WTC11 (cell line): ENCODE measurements at regions of chr16 and their contacts with region 1.

Region 1: GRCh38 chr16:29900102-29900887 is at the start of gene ASPHD1:
- DNase-seq: peak; percentile 86
- ATAC-seq: peak; percentile 54
- H3K4me3 Mint-ChIP-seq: peak within 1 kb of the TSS; percentile 98
- H3K27ac Mint-ChIP-seq: peak within 1 kb of the TSS; percentile 91
- H3K4me1 Mint-ChIP-seq: peaks cover 33% of the 10 kb centered on the region
- H3K27me3 Mint-ChIP-seq: no peaks in the 10 kb centered on the region
- CTCF ChIP-seq: no peak
- total RNA-seq, gene ASPHD1: 17.6 to 26.9 TPM (median 20.2 TPM) in 3 replicates

Region 2: GRCh38 chr16:29805378-29806098 is 94.8 kb before region 1 on chr16:
- CTCF ChIA-PET with region 1: interaction called, 19 read pairs
- POLR2A ChIA-PET with region 1: interaction called, 4 read pairs
- DNase-seq: peak; percentile 97
- ATAC-seq: peak; percentile 78
- H3K4me3 Mint-ChIP-seq: peak overlapping the region; percentile 99
- H3K27ac Mint-ChIP-seq: peak overlapping the region; percentile 100
- H3K4me1 Mint-ChIP-seq: peaks cover 44% of the 10 kb centered on the region
- H3K27me3 Mint-ChIP-seq: no peaks in the 10 kb centered on the region
- CTCF ChIP-seq: no peak

Region 3: GRCh38 chr16:29877266-29877961 is 22.9 kb before region 1 on chr16:
- CTCF ChIA-PET with region 1: interaction called, 17 read pairs
- POLR2A ChIA-PET with region 1: interaction called, 7 read pairs
- DNase-seq: peak; percentile 100
- ATAC-seq: peak; percentile 97
- H3K4me3 Mint-ChIP-seq: peak overlapping the region; percentile 87
- H3K27ac Mint-ChIP-seq: peak overlapping the region; percentile 98
- H3K4me1 Mint-ChIP-seq: peaks cover 10% of the 10 kb centered on the region
- H3K27me3 Mint-ChIP-seq: peaks cover 3% of the 10 kb centered on the region; the same call in 1 of the 2 replicates
- CTCF ChIP-seq: no peak

Region 4: DNA sequence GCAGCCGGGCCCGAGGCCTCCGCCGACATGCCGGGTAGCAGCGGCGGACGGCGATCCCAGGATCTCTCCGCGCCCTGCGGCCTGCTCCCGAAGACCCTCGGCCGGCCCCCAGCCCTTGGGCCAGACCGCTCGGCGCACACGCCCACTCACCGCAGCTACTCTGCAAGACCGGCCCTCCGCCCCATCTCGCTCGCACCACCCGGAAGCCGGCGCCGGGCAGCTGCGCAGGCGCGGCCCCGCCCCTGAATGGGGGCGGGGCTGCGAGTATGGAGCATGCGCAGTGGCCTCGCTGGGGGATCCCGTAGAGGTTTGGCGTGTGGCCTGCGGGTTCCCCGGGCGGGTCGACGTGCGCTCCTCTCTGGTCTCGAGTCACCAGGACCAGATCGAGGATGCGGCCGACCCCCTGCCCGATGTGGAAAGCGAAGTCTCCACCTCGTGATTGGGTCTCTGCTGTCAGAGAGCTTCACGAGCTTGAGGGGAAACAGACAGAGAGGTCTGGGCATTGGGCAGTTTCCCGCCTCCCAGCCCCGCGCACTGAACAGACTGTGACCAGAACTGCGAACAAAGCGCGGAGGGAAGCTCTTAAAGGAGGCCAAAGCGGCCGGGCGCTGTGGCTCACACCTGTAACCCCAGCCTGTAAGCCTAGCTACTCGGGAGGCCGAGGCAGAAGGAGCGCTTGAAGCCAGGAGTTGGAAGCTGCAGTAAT is 25.9 kb after region 1 on chr16 and contains the start of gene KCTD13:
- CTCF ChIA-PET with region 1: interaction called, 10 read pairs
- POLR2A ChIA-PET with region 1: interaction called, 13 read pairs
- DNase-seq: peak; percentile 91
- ATAC-seq: peak; percentile 95
- H3K4me3 Mint-ChIP-seq: peak within 1 kb of the TSS; percentile 93
- H3K27ac Mint-ChIP-seq: peak within 1 kb of the TSS; percentile 97
- H3K4me1 Mint-ChIP-seq: peaks cover 18% of the 10 kb centered on the region
- H3K27me3 Mint-ChIP-seq: no peaks in the 10 kb centered on the region; the same call in 1 of the 2 replicates
- CTCF ChIP-seq: no peak
- total RNA-seq, gene KCTD13: 18.5 to 20.9 TPM (median 19.4 TPM) in 3 replicates

Region 5: GRCh38 chr16:30340621-30341020 is 440.3 kb after region 1 on chr16:
- CTCF ChIA-PET with region 1: no interaction called
- POLR2A ChIA-PET with region 1: interaction called, 10 read pairs
- DNase-seq: no peak
- ATAC-seq: no peak
- H3K4me3 Mint-ChIP-seq: no peak overlapping the region
- H3K27ac Mint-ChIP-seq: no peak overlapping the region
- H3K4me1 Mint-ChIP-seq: peaks cover 10% of the 10 kb centered on the region
- H3K27me3 Mint-ChIP-seq: no peaks in the 10 kb centered on the region
- CTCF ChIP-seq: no peak